ENCODE measurements at regions of chr17 and their contacts with region 1.

Region 1: DNA sequence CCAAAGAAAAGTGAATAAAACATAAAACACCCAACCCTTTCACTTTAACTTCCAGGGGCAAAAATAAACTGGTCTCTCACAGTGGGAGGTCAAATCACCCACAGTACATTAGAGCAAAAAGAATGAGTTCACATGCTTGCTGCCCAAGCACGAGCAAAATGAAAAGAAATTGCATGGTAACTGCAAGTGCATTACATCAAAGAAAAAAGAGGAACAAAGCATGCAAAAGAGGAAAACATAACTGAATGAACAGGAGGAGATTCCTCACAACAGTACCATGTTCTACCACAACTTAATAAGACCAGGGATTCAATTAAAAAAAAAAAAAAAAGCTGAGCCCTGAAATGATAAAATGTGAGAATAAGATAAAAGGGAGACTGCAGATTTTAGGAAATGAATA is 12.3 kb downstream of the DNAH2 start:
- DNase-seq: no peak

Region 2: DNA sequence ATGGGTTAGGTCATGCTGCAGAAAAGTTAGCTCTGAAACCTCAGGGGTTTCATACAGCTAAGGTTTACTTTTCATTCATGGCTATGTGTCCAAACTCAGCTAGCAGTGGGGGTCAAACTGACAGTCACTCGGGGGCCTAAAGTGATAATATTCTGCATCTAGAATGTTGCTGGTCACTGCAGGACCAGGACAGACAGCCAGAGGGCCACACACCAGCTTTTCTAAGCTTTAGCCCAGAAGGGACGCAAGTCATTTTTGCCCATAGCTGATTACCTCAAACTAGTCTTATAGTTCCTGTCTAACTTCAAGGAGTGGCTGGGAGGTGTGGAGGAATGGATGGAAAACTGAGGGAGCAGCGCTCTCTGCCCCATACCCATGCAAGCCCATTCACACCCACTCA is 1982.5 kb before region 1 on chr17:
- intact Hi-C with region 1: loop called in 1 of 2 experiments (anchors 10 kb)
- DNase-seq: no peak

Region 3: GRCh38 chr17:7280519-7281429 is 449.0 kb before region 1 on chr17:
- intact Hi-C with region 1: loop called in 1 of 2 experiments (anchors 5 kb)
- DNase-seq: peak; percentile 95

Measured in posterior vena cava (tissue), 2 donors.